BJ (cell line): ENCODE measurements at regions of chr3 and their contacts with region 1.

Region 1: GRCh38 chr3:129824926-129825541 is 68.5 kb downstream of the TMCC1 start:
- DNase-seq: no peak
- H3K4me3 ChIP-seq: no peak overlapping the region
- H3K27me3 ChIP-seq: no peaks in the 10 kb centered on the region
- CTCF ChIP-seq: peak; percentile 59

Region 2: DNA sequence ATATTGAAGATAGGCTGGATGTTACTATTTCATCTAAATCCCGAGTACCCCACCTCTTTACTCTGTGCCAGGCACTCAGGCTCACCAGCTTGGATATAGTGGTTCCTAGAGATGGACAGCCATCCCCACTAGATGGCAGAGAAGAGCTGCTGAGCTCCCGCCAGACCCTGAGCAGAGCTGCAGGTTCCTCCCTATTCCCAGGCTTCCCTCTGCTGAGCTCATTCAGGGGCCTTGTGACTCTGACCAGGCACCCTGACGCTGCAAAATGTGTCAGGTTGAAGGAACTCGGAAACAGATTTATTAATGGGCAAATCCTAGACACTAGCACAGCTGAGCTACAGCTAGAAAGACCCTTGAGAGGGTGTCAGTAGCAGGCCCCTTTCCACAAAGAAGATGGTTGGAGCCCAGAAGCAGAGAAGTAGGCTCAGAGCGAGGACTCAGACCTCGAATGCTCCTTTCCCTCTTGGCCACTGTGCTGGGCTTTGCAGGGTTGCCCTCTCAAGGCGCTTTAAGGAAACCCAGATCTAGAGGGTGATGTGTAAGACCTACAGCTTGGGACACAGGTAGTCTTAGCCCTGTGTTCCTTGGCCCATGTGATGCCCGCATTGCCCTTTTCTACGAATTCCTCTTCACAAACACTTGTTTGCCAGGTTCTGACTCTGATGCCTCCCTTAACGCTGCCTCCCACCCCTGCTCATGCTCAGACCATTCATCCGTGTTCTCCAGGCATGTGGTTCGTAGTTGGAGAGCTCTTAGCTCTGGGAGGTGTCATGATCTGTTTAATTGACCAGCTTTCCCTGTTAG is 334.6 kb before region 1 on chr3:
- CTCF ChIA-PET with region 1: interaction called, 16 read pairs
- POLR2A ChIA-PET with region 1: no interaction called
- DNase-seq: peak; percentile 74
- H3K4me3 ChIP-seq: no peak overlapping the region
- H3K27me3 ChIP-seq: no peaks in the 10 kb centered on the region
- CTCF ChIP-seq: peak; percentile 92

Region 3: DNA sequence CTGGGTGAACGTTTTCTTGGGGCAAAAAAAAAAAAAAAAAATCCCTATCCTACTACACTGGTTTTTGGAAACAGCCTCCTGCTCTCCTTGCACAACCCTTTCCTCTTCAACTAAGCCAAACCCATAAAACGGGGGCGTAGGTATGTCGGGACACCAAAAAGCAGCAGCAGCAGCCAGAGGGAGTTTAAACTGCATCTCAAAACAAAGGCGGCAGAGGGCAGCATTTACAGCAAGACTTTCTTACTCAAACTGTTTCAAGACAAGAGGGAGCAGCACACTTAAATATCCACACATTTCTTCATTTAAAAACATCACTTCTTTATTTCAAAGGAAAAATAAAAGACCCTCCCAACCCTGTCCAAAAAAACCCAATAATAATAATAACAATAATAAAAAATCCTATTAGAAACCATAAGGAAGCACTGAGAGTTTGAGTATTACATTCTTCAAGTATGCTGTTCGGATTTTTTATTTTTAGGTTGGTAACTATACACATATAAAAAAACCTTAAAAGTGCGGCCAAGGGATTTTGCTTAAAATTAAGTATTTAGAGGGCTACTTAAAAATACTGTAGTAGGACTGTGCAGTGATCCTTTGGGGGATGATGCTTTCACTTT is 174.7 kb before region 1 on chr3:
- CTCF ChIA-PET with region 1: interaction called, 31 read pairs
- POLR2A ChIA-PET with region 1: no interaction called
- DNase-seq: peak; percentile 80
- H3K4me3 ChIP-seq: no peak overlapping the region
- H3K27me3 ChIP-seq: no peaks in the 10 kb centered on the region; the same call in 1 of the 2 replicates
- CTCF ChIP-seq: peak; percentile 71

Region 4: DNA sequence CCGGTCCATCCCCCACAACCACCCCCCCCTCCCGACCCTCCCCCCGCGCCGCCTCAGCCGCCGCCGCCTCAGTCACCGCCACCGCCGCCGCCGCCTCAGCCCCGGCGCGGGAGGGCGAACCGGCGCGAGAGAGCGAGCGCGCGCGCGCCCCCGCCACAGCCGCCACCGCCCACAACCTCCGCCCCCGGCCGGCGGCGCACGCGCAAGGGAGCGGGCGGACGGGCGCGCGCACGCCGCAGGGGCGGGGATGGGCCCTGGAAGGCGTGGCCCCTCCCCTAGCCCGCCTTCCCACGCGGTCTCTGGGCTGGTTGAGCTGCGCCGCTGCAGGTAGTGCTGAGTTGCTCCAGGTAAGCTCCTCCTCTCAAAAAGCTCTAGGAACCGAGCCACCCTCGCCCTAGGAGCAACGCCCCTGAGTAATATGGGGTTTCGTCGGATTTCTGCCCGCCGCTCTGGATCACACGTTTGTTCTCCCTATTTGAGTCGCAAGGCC is 68.6 kb after region 1 on chr3 and contains the start of gene TMCC1:
- CTCF ChIA-PET with region 1: interaction called, 3 read pairs
- POLR2A ChIA-PET with region 1: interaction called, 13 read pairs
- DNase-seq: peak; percentile 11
- H3K4me3 ChIP-seq: peak within 1 kb of the TSS; percentile 88
- H3K27me3 ChIP-seq: no peaks in the 10 kb centered on the region
- CTCF ChIP-seq: no peak
- polyA plus RNA-seq, gene TMCC1: 14.4 and 16.9 TPM in 2 replicates

Region 5: GRCh38 chr3:129934234-129935123 is 109.4 kb after region 1 on chr3:
- CTCF ChIA-PET with region 1: interaction called, 11 read pairs
- POLR2A ChIA-PET with region 1: no interaction called
- DNase-seq: no peak
- H3K4me3 ChIP-seq: no peak overlapping the region
- H3K27me3 ChIP-seq: 0 out of 2 replicates have a peak, but pooled peaks cover 1% of the 10 kb centered on the region
- CTCF ChIP-seq: peak; percentile 85

Region 6: DNA sequence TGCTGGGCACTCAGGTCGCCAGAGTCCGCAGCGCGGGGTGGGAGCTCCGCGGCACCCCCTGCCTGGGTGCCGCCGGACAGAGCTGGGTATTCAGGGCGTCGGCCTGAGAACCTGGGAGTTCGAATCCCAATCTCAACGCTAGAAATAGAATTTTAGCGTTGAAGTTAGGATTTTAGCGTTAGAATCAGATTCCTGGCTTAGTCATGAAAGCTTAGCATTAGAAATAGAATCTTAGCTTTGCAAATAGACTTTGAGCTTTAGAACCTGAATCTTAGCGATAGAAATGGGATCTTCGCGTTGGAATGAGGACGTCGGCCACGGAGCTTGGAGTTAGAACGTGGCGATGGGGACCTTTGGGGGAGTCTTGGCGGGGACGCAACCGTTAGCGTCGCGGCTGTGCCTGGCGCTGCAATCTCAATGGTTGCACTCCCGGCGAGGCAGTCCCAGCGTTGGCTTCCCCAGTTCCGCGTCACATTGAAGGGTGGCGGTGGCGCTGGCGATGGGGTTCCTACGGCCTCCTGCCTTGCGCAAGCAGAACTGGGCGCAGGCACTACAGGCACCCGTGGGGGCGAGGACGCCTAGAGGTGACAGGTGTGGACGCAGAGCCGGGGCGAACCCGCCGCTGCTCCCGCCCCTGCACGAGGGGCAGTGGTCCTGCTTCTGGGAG is 150.1 kb after region 1 on chr3:
- CTCF ChIA-PET with region 1: no interaction called
- POLR2A ChIA-PET with region 1: no interaction called
- DNase-seq: no peak
- H3K4me3 ChIP-seq: no peak overlapping the region
- H3K27me3 ChIP-seq: peaks cover 61% of the 10 kb centered on the region
- CTCF ChIP-seq: no peak